H1 (cell line): ENCODE measurements at regions of chr1 and their contacts with region 1.

Region 1: GRCh38 chr1:50605186-50605875 is 182.1 kb upstream of the DMRTA2 start:
- DNase-seq: no peak
- H3K4me3 ChIP-seq: no peak overlapping the region
- H3K27ac ChIP-seq: no peak overlapping the region
- H3K4me1 ChIP-seq: no peaks in the 10 kb centered on the region
- H3K27me3 ChIP-seq: no peaks in the 10 kb centered on the region
- CTCF ChIP-seq: peak in 2 of 3 experiments; percentile 62 to 64; a peak in 3 of 4 replicates
- EP300 ChIP-seq: no peak
- POLR2A ChIP-seq: no peak
- RAD21 ChIP-seq: peak; percentile 77 to 81

Region 2: DNA sequence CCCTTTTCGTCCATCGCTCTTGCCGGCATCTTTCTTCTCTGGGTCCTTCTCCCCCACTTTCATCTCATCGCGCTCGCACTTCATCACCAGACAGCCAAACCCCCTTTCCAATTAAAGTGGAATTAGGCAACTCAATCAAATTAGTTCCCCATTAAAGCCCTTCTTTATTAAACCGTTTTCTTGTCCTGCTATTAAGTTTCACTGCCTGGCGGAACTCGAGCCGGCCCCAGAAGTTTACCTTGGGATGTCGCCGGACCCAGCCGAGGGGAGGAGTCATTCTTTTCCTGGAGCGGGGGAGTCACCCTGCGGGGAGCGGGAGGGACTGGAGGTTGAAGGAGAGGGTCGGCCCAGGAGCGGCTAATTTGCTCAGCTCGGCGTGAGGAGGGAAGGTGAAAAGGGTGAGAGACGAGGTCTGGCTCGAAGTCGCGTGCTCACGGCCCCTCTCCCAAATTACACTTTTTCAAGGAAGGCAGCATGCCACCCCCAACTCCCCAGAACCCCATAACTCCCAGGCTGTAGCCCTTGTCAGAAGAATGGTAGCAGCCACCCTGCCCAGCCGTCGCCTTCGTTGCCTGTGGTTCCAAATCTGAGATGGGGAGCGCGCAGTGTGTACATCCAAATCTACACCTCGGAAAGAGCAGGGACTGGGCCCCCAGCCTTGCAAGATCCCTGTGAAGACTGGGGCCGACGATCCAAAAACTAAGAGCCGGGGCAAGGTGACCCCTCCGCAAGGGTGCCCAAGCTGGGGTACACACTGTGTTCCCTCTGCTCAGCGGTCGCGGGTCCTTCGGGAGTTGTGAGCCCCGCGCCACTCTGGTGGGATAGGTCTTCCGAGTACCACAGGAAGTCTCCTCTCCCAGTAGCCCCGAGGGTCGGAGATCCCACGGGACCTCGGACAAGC is 188.5 kb before region 1 on chr1:
- CTCF ChIA-PET with region 1: interaction called, 16 read pairs
- POLR2A ChIA-PET with region 1: no interaction called
- DNase-seq: peak in 1 of 2 experiments; percentile 81
- H3K4me3 ChIP-seq: peak overlapping the region; percentile 19 to 58 (median 39); a peak in 6 of 8 replicates
- H3K27ac ChIP-seq: no peak overlapping the region
- H3K4me1 ChIP-seq: peaks cover 0 to 30% (median 17%) of the 10 kb centered on the region in 4 experiments; a peak in 5 of 7 replicates
- H3K27me3 ChIP-seq: peaks cover 89 to 97% (median 91%) of the 10 kb centered on the region in 4 experiments
- CTCF ChIP-seq: no peak
- EP300 ChIP-seq: no peak
- POLR2A ChIP-seq: no peak
- RAD21 ChIP-seq: no peak

Region 3: DNA sequence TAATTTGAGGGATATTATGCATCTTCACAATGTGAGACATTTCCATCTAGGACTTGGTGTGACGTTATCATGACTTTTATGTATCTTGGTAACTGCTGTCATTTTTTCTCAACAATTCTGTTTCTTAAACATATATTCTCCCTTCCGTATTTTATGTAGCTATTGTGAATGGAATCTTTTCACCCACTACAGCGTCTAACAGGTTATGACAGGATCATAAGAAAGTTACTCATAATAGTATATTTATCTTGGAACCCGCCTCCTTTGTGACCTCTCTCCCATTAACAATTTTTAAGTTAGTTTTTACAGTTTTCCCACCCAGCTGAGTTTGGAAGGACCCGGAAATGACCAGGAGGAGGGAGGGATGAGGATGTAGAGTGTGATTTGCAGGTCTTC is 175.3 kb before region 1 on chr1:
- CTCF ChIA-PET with region 1: interaction called, 13 read pairs
- POLR2A ChIA-PET with region 1: no interaction called
- DNase-seq: no peak
- H3K4me3 ChIP-seq: peak overlapping the region; percentile 23 to 55 (median 26); a peak in 6 of 8 replicates
- H3K27ac ChIP-seq: no peak overlapping the region
- H3K4me1 ChIP-seq: peaks cover 5 to 20% (median 7%) of the 10 kb centered on the region in 4 experiments
- H3K27me3 ChIP-seq: peaks cover 69 to 90% (median 79%) of the 10 kb centered on the region in 4 experiments
- CTCF ChIP-seq: no peak
- EP300 ChIP-seq: no peak
- POLR2A ChIP-seq: no peak
- RAD21 ChIP-seq: no peak

Region 4: DNA sequence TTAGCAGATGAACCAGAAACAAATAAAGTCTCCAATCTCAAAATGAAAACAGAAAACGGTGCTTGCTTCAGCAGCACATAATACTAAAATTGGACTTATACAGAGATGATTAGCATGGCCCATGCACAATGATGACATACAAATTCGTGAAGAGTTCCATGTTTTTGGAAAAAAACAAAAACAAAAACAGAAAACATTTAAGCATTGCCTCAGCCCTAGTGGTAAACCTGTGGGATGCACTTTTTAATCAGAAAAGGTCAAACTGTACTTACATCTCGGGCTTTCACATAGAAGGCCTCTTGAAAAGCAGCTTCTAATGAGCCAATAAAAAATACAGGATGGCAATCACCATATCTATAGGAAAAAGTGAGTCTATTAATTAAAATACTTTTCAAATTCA is 23.0 kb before region 1 on chr1:
- CTCF ChIA-PET with region 1: interaction called, 16 read pairs
- POLR2A ChIA-PET with region 1: no interaction called
- DNase-seq: no peak
- H3K4me3 ChIP-seq: no peak overlapping the region
- H3K27ac ChIP-seq: no peak overlapping the region
- H3K4me1 ChIP-seq: peaks cover 0 to 2% (median 0%) of the 10 kb centered on the region in 4 experiments; a peak in 1 of 7 replicates
- H3K27me3 ChIP-seq: no peaks in the 10 kb centered on the region; a peak in 1 of 7 replicates
- CTCF ChIP-seq: no peak
- EP300 ChIP-seq: no peak
- POLR2A ChIP-seq: no peak
- RAD21 ChIP-seq: no peak

Region 5: DNA sequence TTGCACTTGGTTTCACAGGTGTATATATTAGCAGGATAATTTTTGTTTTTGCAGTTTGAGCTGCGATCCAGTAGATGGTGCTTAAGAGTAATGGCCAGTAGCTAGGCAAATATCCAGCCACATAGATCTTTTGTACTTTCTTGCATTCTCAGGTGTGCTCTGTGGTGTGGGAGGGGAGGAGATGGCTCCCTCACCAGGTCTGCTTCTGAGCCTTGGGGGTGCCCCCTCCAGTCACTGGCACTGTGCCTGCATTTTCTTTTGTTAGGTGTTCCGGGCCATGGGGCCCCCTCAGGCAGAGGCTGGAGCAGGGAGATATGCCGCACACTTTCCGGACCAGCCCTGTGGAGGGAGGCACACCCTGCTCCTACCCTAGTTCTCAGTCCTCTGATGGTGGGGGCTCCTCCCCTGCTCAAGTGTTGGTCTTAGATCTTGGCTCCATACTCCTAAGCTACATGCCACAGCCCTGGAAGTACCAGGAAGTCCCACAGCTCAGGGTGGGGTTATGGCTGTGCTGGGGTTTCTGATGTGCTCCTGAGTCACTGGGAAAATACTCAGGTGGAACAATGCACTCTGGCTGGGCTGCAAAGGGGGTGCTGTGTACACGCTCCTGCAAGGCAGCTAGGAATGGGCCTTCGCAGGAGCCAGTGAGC is 15.5 kb after region 1 on chr1:
- CTCF ChIA-PET with region 1: interaction called, 65 read pairs
- POLR2A ChIA-PET with region 1: no interaction called
- DNase-seq: peak; percentile 33 to 65
- H3K4me3 ChIP-seq: no peak overlapping the region
- H3K27ac ChIP-seq: 0 out of 2 replicates have a peak overlapping the region, but pooled peaks have one; percentile 32
- H3K4me1 ChIP-seq: peaks cover 0 to 6% (median 0%) of the 10 kb centered on the region in 4 experiments; a peak in 4 of 7 replicates
- H3K27me3 ChIP-seq: no peaks in the 10 kb centered on the region
- CTCF ChIP-seq: peak in 2 of 3 experiments; percentile 70 to 77; a peak in 3 of 4 replicates
- EP300 ChIP-seq: no peak
- POLR2A ChIP-seq: no peak
- RAD21 ChIP-seq: peak; percentile 74 to 82